ENCODE measurements at regions of chr11 and their contacts with region 1.

Region 1: GRCh38 chr11:2975594-2975993 is 16.5 kb downstream of the NAP1L4 start:
- DNase-seq: peak; percentile 53
- H3K4me3 Mint-ChIP-seq: no peak overlapping the region
- H3K27ac Mint-ChIP-seq: peak overlapping the region; percentile 38
- H3K4me1 Mint-ChIP-seq: peaks cover 37% of the 10 kb centered on the region
- H3K27me3 Mint-ChIP-seq: no peaks in the 10 kb centered on the region

Region 2: GRCh38 chr11:2612884-2613571 is 362.6 kb before region 1 on chr11:
- CTCF ChIA-PET with region 1: no interaction called
- POLR2A ChIA-PET with region 1: no interaction called
- DNase-seq: no peak
- H3K4me3 Mint-ChIP-seq: no peak overlapping the region
- H3K27ac Mint-ChIP-seq: no peak overlapping the region
- H3K4me1 Mint-ChIP-seq: no peaks in the 10 kb centered on the region
- H3K27me3 Mint-ChIP-seq: no peaks in the 10 kb centered on the region

Region 3: DNA sequence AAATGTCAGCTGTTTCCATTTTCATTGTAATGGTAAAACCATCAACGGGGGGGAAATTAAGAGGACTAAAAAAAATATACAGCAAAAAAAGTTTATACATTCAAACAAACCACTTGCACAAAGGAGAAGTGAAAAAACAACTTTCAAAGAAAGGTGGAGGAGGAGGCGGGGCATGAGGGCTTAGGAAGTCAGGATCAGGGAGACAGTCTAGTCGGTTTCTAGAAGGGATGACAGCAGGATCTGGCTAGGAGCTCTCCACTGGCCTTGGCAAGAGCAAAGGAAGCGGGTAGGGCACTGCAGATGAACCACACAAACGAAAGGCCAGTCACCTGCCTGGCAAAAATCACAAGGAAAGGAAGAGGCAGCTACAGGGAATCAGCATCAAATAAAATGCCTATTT is 14.5 kb before region 1 on chr11:
- CTCF ChIA-PET with region 1: interaction called, 14 read pairs
- POLR2A ChIA-PET with region 1: interaction called, 10 read pairs
- DNase-seq: no peak
- H3K4me3 Mint-ChIP-seq: no peak overlapping the region
- H3K27ac Mint-ChIP-seq: peak overlapping the region; percentile 52
- H3K4me1 Mint-ChIP-seq: peaks cover 29% of the 10 kb centered on the region
- H3K27me3 Mint-ChIP-seq: no peaks in the 10 kb centered on the region

Region 4: DNA sequence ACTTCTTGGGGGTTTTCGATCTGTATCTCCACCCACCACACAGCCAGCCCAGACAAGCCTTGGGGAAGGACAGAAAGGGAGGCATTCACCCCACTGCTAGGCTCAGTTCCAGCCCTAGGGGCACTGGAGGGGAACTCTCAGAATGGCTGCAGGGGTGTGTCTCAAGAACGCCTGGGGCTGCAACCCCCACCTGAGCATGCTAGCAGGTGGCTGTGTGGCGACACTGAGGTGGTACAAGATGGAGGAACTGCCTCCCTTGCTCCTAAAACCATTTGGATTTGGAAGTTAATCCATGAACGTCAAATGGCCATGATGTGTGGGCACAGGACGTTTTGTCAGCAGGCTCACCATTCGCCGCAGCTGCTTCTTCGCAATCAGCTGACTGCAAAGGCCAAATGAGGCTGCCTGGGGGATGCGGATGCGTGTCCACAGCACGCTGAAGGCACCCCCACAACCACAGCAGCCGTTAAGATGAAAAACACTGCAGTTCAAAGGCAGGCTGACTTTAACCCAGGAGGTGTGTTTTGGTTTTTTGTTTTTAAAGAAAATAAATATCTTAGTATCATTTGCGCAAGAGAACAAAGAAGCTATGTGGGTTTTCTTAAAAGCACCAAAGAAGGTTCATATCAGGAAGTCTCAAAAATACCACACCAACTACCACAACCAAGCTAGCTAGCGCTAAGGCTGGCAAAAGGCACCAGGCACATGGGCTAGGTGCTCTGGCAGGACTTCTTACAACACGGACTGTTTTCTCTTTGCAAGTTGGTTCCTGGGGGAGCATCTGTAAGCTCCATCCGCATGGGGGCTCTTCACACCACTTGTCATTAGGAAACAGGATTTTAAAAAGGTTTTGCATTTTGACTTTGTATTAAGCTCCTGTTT is 38.7 kb after region 1 on chr11:
- CTCF ChIA-PET with region 1: interaction called, 30 read pairs
- POLR2A ChIA-PET with region 1: interaction called, 12 read pairs
- DNase-seq: peak; percentile 87
- H3K4me3 Mint-ChIP-seq: peak overlapping the region; percentile 11
- H3K27ac Mint-ChIP-seq: peak overlapping the region; percentile 95
- H3K4me1 Mint-ChIP-seq: peaks cover 84% of the 10 kb centered on the region
- H3K27me3 Mint-ChIP-seq: no peaks in the 10 kb centered on the region

Region 5: DNA sequence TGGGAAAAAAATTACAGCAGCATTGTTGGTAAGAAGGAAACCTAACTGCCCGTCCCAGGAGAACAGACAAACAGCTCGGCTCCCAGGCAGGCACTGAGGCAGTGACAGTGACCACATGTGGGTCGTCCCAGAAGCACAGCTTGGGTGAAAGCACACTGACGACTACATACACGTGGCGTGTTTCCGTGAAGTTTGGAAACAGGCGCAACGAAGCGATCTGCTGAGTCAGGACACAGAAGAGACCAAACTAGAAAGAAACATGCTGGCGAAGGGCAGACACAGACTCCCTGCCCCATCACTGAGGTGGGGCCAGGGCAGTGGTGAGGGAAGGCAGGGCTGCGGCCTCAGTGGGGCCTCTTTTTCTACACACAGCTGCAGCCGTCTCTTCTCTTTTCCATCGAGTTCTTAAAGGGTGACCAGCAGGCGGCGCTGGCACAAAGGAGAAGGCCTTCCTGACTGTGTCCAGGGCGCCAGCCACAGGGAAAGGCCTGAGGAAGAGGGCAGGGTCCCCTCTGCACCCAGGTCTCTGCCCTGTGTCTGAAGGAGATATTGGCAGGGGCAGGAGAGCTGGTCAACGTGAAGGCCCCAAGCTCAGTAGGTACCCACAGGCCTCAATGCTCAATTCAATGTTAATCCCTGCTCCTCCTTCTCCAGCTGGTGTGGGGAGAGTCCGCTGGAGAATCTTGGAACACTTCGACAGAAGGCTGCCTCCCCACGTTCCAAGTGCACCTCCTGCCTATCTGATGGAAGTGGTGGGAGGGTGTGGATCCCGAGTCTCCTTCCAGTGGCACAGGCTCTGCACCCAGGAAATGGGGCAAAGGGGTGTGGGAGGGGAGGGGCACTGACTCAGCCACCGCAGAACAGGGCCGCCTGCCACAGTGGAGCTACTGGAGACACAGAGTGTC is 61.7 kb after region 1 on chr11:
- CTCF ChIA-PET with region 1: interaction called, 11 read pairs
- POLR2A ChIA-PET with region 1: interaction called, 3 read pairs
- DNase-seq: peak; percentile 68
- H3K4me3 Mint-ChIP-seq: no peak overlapping the region
- H3K27ac Mint-ChIP-seq: peak overlapping the region; percentile 55
- H3K4me1 Mint-ChIP-seq: peaks cover 47% of the 10 kb centered on the region
- H3K27me3 Mint-ChIP-seq: no peaks in the 10 kb centered on the region

Measured in activated CD4-positive, alpha-beta memory T cell treated with anti-CD3 and anti-CD28 coated beads, Interleukin-2, amount 10 ng/mL, durations not matched to agents 7 days and 5 days (primary cell).